ENCODE measurements at regions of chr9 and their contacts with region 1.

Region 1: GRCh38 chr9:1057910-1058309 is 7.8 kb downstream of the DMRT2 start:
- DNase-seq: no peak
- ATAC-seq: peak; percentile 77
- H3K4me3 ChIP-seq: no peak overlapping the region
- H3K27ac ChIP-seq: no peak overlapping the region
- H3K4me1 ChIP-seq: no peaks in the 10 kb centered on the region
- H3K27me3 ChIP-seq: no peaks in the 10 kb centered on the region; a peak in 1 of 4 replicates
- CTCF ChIP-seq: no peak
- EP300 ChIP-seq: no peak
- POLR2A ChIP-seq: no peak
- RAD21 ChIP-seq: no peak

Region 2: GRCh38 chr9:962023-962422 is 95.9 kb before region 1 on chr9:
- CTCF ChIA-PET with region 1: no interaction called
- POLR2A ChIA-PET with region 1: no interaction called
- RAD21 ChIA-PET with region 1: no interaction called
- SMC1A ChIA-PET with region 1: no interaction called
- in situ Hi-C with region 1: no loop called
- intact Hi-C with region 1: no loop called
- DNase-seq: no peak
- ATAC-seq: no peak
- H3K4me3 ChIP-seq: no peak overlapping the region
- H3K27ac ChIP-seq: no peak overlapping the region
- H3K4me1 ChIP-seq: no peaks in the 10 kb centered on the region
- H3K27me3 ChIP-seq: peaks cover 2 to 4% of the 10 kb centered on the region in 2 experiments; a peak in 3 of 4 replicates
- CTCF ChIP-seq: no peak
- EP300 ChIP-seq: no peak
- POLR2A ChIP-seq: no peak
- RAD21 ChIP-seq: no peak

Region 3: GRCh38 chr9:1039589-1039988 is 18.3 kb before region 1 on chr9:
- CTCF ChIA-PET with region 1: no interaction called
- POLR2A ChIA-PET with region 1: no interaction called
- RAD21 ChIA-PET with region 1: no interaction called
- SMC1A ChIA-PET with region 1: no interaction called
- in situ Hi-C with region 1: no loop called
- intact Hi-C with region 1: no loop called
- DNase-seq: no peak
- ATAC-seq: no peak
- H3K4me3 ChIP-seq: no peak overlapping the region
- H3K27ac ChIP-seq: no peak overlapping the region
- H3K4me1 ChIP-seq: no peaks in the 10 kb centered on the region
- H3K27me3 ChIP-seq: peaks cover 2 to 8% of the 10 kb centered on the region in 2 experiments
- CTCF ChIP-seq: no peak
- EP300 ChIP-seq: no peak
- POLR2A ChIP-seq: no peak
- RAD21 ChIP-seq: no peak

Region 4: GRCh38 chr9:1071730-1072129 is 13.8 kb after region 1 on chr9:
- CTCF ChIA-PET with region 1: interaction called, 10 read pairs
- POLR2A ChIA-PET with region 1: no interaction called
- RAD21 ChIA-PET with region 1: interaction called, 3 read pairs
- SMC1A ChIA-PET with region 1: interaction called, 5 read pairs
- in situ Hi-C with region 1: no loop called
- intact Hi-C with region 1: no loop called
- DNase-seq: no peak
- ATAC-seq: no peak
- H3K4me3 ChIP-seq: no peak overlapping the region
- H3K27ac ChIP-seq: no peak overlapping the region
- H3K4me1 ChIP-seq: no peaks in the 10 kb centered on the region
- H3K27me3 ChIP-seq: no peaks in the 10 kb centered on the region
- CTCF ChIP-seq: no peak
- EP300 ChIP-seq: no peak
- POLR2A ChIP-seq: no peak
- RAD21 ChIP-seq: no peak

Measured in GM12878 (cell line).